Activated CD4-positive, alpha-beta T cell treated with anti-CD3 and anti-CD28 coated beads, Interleukin-2, amount 10 ng/mL, durations not matched to agents 7 days and 5 days (primary cell): ENCODE measurements at regions of chr4 and their contacts with region 1.

Region 1: DNA sequence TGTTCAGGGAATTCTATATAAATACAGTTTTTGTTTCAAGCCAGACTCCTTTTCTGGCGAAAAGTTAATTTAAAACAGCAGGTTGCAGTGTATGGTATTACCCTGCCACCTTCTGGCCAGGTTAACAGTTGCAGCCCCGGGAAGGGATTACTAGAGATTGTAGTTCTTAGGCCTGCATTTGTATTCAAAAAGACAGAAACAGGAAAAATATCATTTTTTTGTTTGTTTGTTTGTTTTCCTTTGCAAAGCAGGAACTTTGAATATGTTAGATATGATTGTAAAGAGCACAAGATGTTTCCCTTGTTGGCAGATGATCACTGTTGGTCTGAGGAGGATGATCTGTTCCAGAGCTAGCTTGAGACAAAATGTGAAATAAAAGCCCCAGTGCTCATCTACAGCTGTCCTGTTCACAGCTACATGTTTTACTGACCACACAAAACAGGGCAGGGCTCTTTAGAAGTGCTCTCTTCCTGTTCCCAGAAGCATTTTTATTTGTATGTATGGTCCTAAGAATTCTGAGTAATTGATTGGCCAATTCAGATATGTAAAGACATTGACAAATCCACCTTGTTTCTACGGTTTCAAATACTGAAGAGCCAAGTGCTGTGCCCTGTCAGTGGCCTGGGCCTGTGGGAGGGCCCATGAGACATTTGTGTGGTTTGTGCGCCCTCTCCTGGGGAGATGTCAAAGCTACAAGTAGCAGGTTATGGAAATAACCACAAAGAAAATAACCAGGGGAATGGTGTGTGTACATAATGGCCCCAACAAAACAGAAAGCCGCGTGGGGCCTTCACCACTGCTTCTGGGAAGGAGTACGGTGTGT is 57.9 kb downstream of the CLDN22 start:
- DNase-seq: peak; percentile 81
- H3K4me3 Mint-ChIP-seq: no peak overlapping the region
- H3K27ac Mint-ChIP-seq: peak overlapping the region; percentile 6
- H3K4me1 Mint-ChIP-seq: peaks cover 7% of the 10 kb centered on the region
- H3K27me3 Mint-ChIP-seq: peaks cover 2% of the 10 kb centered on the region

Region 2: DNA sequence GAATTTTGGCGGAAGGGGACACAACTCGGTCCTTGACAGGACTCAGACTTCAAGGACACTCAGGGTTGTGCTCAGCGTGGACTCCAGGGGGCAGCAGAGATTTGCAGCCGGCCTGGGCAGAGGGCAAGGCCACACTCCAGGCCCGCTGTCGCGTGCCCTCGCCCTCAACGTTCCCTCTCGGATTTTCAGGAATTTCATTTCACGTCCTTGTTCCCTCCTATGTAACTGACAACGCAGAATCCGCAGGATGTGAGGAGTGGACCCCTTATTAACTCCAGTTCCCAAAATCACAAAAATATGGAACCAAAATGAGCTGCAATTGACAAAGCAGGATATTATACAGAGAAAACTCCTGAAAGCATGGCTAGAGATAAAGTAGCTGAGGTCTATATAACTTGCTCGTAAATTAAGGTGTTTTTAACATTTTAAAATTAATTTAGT is 323.9 kb before region 1 on chr4:
- CTCF ChIA-PET with region 1: interaction called, 11 read pairs
- POLR2A ChIA-PET with region 1: no interaction called
- DNase-seq: peak; percentile 62
- H3K4me3 Mint-ChIP-seq: no peak overlapping the region
- H3K27ac Mint-ChIP-seq: no peak overlapping the region
- H3K4me1 Mint-ChIP-seq: peaks cover 2% of the 10 kb centered on the region
- H3K27me3 Mint-ChIP-seq: peaks cover 14% of the 10 kb centered on the region

Region 3: DNA sequence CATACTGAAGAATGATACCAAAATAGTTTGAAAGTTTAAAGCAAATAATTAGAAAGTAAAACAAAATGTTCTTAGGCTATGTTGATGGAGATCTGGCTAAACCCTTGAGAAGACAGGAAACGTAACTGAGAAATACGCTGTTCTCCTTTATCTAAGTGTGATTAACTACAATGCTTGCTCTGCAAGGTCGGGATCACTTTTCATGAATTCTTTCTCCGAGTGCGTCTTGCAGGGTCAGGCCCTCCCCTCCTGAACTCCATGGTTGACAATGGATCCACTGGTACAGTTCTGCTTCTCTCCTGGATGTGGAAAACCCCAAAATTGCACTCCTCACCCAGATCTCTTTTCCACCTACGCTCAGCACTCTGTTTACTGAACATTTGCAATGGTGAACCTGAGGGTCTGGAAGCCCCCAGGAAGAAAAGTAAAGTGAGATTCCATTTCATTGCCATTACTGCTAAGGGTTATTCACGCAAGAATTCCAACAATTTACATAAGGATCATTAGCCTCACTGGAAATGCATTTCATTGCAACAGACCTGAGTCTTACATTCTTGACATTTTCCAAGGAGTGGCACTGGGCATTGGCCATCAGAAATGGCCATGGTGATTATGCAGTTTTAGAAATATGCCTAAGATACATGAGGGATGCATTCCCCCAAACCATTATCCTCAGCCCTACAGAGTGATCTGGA is 187.7 kb before region 1 on chr4:
- CTCF ChIA-PET with region 1: interaction called, 17 read pairs
- POLR2A ChIA-PET with region 1: no interaction called
- DNase-seq: no peak
- H3K4me3 Mint-ChIP-seq: no peak overlapping the region
- H3K27ac Mint-ChIP-seq: no peak overlapping the region
- H3K4me1 Mint-ChIP-seq: no peaks in the 10 kb centered on the region
- H3K27me3 Mint-ChIP-seq: peaks cover 4% of the 10 kb centered on the region

Region 4: DNA sequence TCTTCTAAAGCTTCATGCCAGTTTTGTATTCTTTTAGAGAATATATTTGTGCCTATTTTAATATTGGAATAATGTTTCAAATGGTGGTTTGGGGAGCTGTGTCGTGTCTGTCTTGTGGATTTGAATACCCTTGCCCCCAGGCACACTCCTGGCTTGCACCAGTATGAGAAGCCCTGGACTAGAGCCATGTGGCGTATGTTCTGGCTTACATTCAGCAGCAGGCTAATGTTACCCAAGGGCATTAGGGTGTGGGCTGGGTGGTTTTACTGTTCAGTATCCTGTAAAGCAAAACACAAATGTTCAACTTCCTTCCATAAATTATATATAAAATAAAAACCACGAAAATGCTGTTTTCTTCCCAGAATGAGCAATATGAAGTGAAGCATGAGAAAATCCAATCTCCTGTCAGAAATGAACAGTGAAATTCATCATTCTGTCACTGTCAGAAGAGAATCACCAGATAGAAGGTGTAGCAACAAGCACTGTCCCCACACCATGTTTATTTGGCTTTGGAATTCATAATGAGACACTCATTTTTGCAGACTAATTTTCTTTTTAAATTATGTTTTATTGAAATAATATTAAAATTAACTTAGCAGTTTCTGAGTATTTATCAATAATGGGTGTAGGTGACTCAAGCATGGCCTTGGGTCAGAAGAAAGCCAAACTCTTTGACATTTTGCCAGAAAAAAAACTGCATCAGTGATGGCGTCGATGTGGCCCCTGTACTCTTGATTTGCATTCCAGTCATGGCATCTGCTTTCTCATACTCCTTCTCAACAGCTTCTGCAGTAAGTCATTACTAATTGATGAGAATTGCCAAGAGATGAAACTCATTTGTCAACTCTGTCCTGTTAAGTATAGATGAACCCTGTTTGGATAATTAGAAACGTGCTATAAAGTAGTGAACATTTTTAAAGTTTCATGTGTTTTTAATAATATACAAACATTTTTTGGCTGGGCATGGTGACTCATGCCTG is 119.3 kb before region 1 on chr4:
- CTCF ChIA-PET with region 1: no interaction called
- POLR2A ChIA-PET with region 1: no interaction called
- DNase-seq: no peak
- H3K4me3 Mint-ChIP-seq: no peak overlapping the region
- H3K27ac Mint-ChIP-seq: no peak overlapping the region
- H3K4me1 Mint-ChIP-seq: no peaks in the 10 kb centered on the region
- H3K27me3 Mint-ChIP-seq: no peaks in the 10 kb centered on the region

Region 5: DNA sequence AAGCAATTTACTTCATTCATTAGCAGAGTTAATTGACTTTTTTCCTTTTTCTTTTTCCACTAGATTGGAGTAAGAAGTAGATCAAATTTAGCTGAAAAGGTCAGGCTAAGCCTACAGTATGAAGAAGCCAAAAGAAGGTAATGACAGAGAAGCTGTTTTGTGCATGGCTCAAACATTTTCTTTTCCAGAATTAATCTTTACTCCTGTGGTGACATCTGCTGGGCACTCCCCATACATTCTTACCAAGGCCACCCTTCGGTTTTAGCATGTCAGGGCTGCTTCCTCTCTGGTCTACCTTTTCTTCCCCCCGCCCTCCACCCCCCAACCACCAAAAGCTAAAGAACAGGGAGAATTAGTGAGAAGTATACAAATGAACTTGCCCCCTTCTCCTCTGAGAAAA is 12.3 kb before region 1 on chr4:
- CTCF ChIA-PET with region 1: interaction called, 10 read pairs
- POLR2A ChIA-PET with region 1: no interaction called
- DNase-seq: peak; percentile 18
- H3K4me3 Mint-ChIP-seq: no peak overlapping the region
- H3K27ac Mint-ChIP-seq: no peak overlapping the region
- H3K4me1 Mint-ChIP-seq: no peaks in the 10 kb centered on the region
- H3K27me3 Mint-ChIP-seq: peaks cover 3% of the 10 kb centered on the region

Region 6: GRCh38 chr4:183798301-183799253 is 536.4 kb after region 1 on chr4:
- CTCF ChIA-PET with region 1: no interaction called
- POLR2A ChIA-PET with region 1: no interaction called
- DNase-seq: peak; percentile 24
- H3K4me3 Mint-ChIP-seq: peak overlapping the region; percentile 33
- H3K27ac Mint-ChIP-seq: peak overlapping the region; percentile 69
- H3K4me1 Mint-ChIP-seq: peaks cover 13% of the 10 kb centered on the region
- H3K27me3 Mint-ChIP-seq: peaks cover 67% of the 10 kb centered on the region